ENCODE measurements at regions of chr5 and their contacts with region 1.

Region 1: DNA sequence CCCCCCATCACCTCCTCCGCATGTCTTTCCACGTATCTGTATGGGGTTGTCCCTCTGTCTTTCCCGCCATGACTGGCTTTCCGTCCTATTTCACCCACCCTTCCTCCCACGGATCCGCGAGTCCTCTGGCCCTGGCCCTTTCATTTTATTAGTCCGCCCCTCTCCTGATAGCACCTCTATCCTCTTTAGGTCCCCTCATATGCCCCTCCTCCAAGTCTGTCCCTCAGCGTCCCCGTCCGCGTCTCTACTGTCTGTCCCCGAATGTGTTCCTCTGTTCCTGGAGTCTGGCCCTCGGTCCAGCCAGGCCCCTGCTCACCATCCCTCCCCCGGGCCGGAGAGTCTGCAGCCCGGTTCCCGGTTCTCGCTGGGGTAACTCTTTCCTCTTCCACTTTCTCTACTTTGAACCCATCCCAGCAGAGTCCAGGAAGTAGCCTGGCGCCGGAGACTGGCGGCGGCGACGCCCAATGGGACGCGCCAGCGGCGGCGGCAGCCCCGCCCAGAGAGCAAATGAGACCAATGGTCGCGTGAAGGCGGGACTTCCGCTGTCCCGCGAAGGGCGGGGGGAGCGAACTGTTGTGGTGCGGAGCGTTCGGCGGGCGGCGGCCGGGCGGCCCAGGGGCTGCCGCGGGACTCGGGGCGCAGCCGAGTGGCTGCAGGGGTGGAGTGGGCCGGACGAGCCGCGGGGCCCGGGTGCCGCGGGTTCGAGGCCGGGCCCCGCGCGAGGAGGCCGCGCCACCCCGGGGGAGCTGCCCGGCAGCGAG is at the start of gene SAP30L:
- DNase-seq: peak; percentile 97
- ATAC-seq: peak; percentile 96
- H3K4me3 ChIP-seq: peak within 1 kb of the TSS; percentile 78 to 99 (median 90)
- H3K4me3 Mint-ChIP-seq: peak within 1 kb of the TSS; percentile 98
- H3K27ac ChIP-seq: peak within 1 kb of the TSS; percentile 9 to 75
- H3K27ac Mint-ChIP-seq: peak within 1 kb of the TSS; percentile 93
- H3K4me1 ChIP-seq: peaks cover 24 to 32% of the 10 kb centered on the region in 2 donors
- H3K4me1 Mint-ChIP-seq: peaks cover 53% of the 10 kb centered on the region
- H3K27me3 ChIP-seq: no peaks in the 10 kb centered on the region
- H3K27me3 Mint-ChIP-seq: no peaks in the 10 kb centered on the region
- CTCF ChIP-seq: no peak
- total RNA-seq, gene SAP30L: 41.5 and 50.0 TPM in 2 replicates

Region 2: GRCh38 chr5:154038707-154039457 is 406.7 kb before region 1 on chr5 and contains the starts of genes FAM114A2 and MFAP3:
- CTCF ChIA-PET with region 1: no interaction called
- POLR2A ChIA-PET with region 1: no interaction called
- intact Hi-C with region 1: loop called (anchors 1 kb)
- DNase-seq: peak; percentile 90
- ATAC-seq: peak; percentile 98
- H3K4me3 ChIP-seq: peak within 1 kb of the TSS; percentile 77 to 94 (median 86)
- H3K4me3 Mint-ChIP-seq: peak within 1 kb of the TSS; percentile 99
- H3K27ac ChIP-seq: peak within 1 kb of the TSS; percentile 88 to 90
- H3K27ac Mint-ChIP-seq: peak within 1 kb of the TSS; percentile 99
- H3K4me1 ChIP-seq: peaks cover 13 to 16% of the 10 kb centered on the region in 2 donors
- H3K4me1 Mint-ChIP-seq: peaks cover 46% of the 10 kb centered on the region
- H3K27me3 ChIP-seq: no peaks in the 10 kb centered on the region
- H3K27me3 Mint-ChIP-seq: no peaks in the 10 kb centered on the region
- CTCF ChIP-seq: no peak
- total RNA-seq, gene FAM114A2: 34.2 and 36.2 TPM in 2 replicates
- total RNA-seq, gene MFAP3: 22.9 and 27.1 TPM in 2 replicates

Region 3: GRCh38 chr5:154260224-154260927 is 185.2 kb before region 1 on chr5:
- CTCF ChIA-PET with region 1: no interaction called
- POLR2A ChIA-PET with region 1: no interaction called
- intact Hi-C with region 1: no loop called
- DNase-seq: no peak
- ATAC-seq: no peak
- H3K4me3 ChIP-seq: no peak overlapping the region
- H3K4me3 Mint-ChIP-seq: no peak overlapping the region
- H3K27ac ChIP-seq: no peak overlapping the region
- H3K27ac Mint-ChIP-seq: no peak overlapping the region
- H3K4me1 ChIP-seq: peaks cover 5 to 8% of the 10 kb centered on the region in 2 donors
- H3K4me1 Mint-ChIP-seq: peaks cover 28% of the 10 kb centered on the region
- H3K27me3 ChIP-seq: no peaks in the 10 kb centered on the region
- H3K27me3 Mint-ChIP-seq: no peaks in the 10 kb centered on the region
- CTCF ChIP-seq: no peak

Region 4: DNA sequence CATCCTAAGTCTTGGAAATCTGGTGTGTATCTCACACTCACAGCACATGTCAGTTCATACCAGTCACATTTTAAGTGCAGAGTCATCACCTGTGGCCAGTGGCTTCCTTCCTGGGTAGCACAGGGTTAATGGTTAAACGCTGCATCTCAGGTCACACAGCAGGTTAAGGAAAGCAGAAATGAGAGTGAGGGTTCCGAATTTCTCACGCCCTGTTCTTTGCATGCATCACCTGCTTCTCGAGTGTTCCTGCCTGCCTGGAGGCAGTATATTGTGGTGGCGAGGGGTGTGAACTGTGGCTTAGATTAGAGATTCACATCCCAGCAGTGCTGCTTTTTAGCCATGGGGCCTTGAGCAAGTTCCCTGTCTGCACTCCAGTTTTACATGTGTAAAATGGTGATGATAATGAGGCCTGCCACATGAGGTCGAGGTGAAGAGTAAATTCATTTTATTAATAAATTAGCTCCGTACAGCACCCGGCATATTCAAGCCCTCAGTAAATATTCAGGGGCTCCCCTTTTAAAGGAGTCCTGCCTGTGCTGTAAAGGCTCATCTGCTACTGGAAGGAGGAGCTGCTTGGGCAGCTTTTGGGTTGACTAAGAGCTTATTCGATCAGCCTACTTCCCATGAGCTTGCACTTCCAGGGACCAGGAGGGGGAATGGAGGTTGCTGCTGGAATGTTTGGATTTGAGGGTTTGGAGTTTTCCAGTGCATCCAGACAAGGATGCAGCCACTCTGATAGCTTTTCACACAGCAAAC is 60.9 kb before region 1 on chr5:
- CTCF ChIA-PET with region 1: no interaction called
- POLR2A ChIA-PET with region 1: no interaction called
- intact Hi-C with region 1: loop called (anchors 2 kb)
- DNase-seq: peak; percentile 89
- ATAC-seq: peak; percentile 86
- H3K4me3 ChIP-seq: peak overlapping the region in 4 of 5 experiments; percentile 18 to 56 (median 26)
- H3K4me3 Mint-ChIP-seq: peak overlapping the region; percentile 87
- H3K27ac ChIP-seq: peak overlapping the region; percentile 88 to 95
- H3K27ac Mint-ChIP-seq: peak overlapping the region; percentile 94
- H3K4me1 ChIP-seq: peaks cover 25 to 32% of the 10 kb centered on the region in 2 donors
- H3K4me1 Mint-ChIP-seq: peaks cover 31% of the 10 kb centered on the region
- H3K27me3 ChIP-seq: no peaks in the 10 kb centered on the region
- H3K27me3 Mint-ChIP-seq: no peaks in the 10 kb centered on the region
- CTCF ChIP-seq: no peak

Region 5: GRCh38 chr5:154430466-154430865 is 15.1 kb before region 1 on chr5:
- CTCF ChIA-PET with region 1: no interaction called
- POLR2A ChIA-PET with region 1: no interaction called
- intact Hi-C with region 1: no loop called
- DNase-seq: no peak
- ATAC-seq: no peak
- H3K4me3 ChIP-seq: no peak overlapping the region
- H3K4me3 Mint-ChIP-seq: no peak overlapping the region
- H3K27ac ChIP-seq: no peak overlapping the region
- H3K27ac Mint-ChIP-seq: no peak overlapping the region
- H3K4me1 ChIP-seq: no peaks in the 10 kb centered on the region
- H3K4me1 Mint-ChIP-seq: no peaks in the 10 kb centered on the region
- H3K27me3 ChIP-seq: no peaks in the 10 kb centered on the region
- H3K27me3 Mint-ChIP-seq: no peaks in the 10 kb centered on the region
- CTCF ChIP-seq: no peak

Region 6: GRCh38 chr5:154940772-154941620 is 495.4 kb after region 1 on chr5 and contains the start of gene MRPL22:
- CTCF ChIA-PET with region 1: no interaction called
- POLR2A ChIA-PET with region 1: no interaction called
- intact Hi-C with region 1: loop called (anchors 1 kb)
- DNase-seq: peak; percentile 97
- ATAC-seq: peak; percentile 67
- H3K4me3 ChIP-seq: peak within 1 kb of the TSS; percentile 57 to 94 (median 77)
- H3K4me3 Mint-ChIP-seq: peak within 1 kb of the TSS; percentile 99
- H3K27ac ChIP-seq: peak within 1 kb of the TSS; percentile 56 to 88
- H3K27ac Mint-ChIP-seq: peak within 1 kb of the TSS; percentile 93
- H3K4me1 ChIP-seq: peaks cover 27 to 32% of the 10 kb centered on the region in 2 donors
- H3K4me1 Mint-ChIP-seq: peaks cover 51% of the 10 kb centered on the region
- H3K27me3 ChIP-seq: no peaks in the 10 kb centered on the region
- H3K27me3 Mint-ChIP-seq: no peaks in the 10 kb centered on the region
- CTCF ChIP-seq: no peak
- total RNA-seq, gene MRPL22: 21.4 and 32.5 TPM in 2 replicates

Measured in B cell (primary cell).